Tibial artery (tissue), 4 donors: ENCODE measurements at regions of chr13 and their contacts with region 1.

Region 1: GRCh38 chr13:52128714-52129700 is at the start of gene NEK5:
- DNase-seq: peak; percentile 45 to 71
- H3K4me3 ChIP-seq: peak within 1 kb of the TSS; percentile 59 to 62
- H3K27ac ChIP-seq: peak within 1 kb of the TSS in 1 of 2 donors; percentile 52
- H3K4me1 ChIP-seq: peaks cover 0 to 16% (median 12%) of the 10 kb centered on the region in 4 donors
- H3K27me3 ChIP-seq: no peaks in the 10 kb centered on the region
- CTCF ChIP-seq: peak; percentile 57 to 60

Region 2: DNA sequence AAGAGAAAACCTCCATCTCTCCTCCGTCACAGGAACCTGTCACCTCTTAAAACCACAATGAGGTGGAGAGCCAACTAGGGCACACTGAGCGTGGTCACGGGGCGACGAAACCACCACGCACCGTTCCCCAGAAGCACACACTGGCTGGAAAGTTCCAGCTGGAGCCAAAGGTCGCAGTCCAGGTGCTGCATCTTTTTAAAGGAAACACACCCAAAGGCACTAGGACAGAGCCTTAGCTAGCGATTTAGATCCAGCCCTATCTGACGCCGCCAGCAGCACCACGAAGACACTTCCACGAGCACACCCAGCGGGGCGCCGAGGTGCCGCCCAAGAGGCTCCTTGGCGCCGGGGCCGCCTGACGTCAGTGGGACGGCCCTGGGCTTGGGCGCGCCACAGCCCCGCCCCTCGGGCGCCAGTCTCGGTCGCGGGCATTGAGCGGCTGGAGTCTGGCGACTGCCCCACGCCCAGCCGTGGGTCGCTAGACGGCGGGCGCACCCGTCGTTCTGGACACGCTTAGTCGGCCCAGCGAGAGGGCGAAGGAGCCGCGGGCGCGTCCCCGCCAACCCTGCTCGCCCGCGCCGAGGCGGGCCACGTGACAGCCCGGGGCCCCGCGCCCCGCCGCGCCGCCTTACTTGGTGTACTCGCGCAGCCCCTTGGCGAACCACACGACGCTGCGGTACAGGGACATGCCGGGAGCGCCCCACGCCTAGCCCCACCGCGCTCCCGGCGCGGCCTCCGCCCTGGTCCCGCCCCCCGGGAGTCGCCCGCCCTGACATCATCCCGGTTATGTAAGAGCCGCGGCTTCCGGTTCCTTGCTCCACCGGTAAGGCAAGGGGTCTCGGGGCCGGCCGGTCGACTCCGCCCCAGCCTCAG is 325.3 kb before region 1 on chr13 and contains the start of gene DHRS12:
- intact Hi-C with region 1: no loop called
- DNase-seq: peak; percentile 93 to 96
- H3K4me3 ChIP-seq: peak within 1 kb of the TSS; percentile 73 to 74
- H3K27ac ChIP-seq: peak within 1 kb of the TSS; percentile 95 to 99
- H3K4me1 ChIP-seq: peaks cover 0 to 61% (median 50%) of the 10 kb centered on the region in 4 donors
- H3K27me3 ChIP-seq: no peaks in the 10 kb centered on the region
- CTCF ChIP-seq: no peak

Region 3: DNA sequence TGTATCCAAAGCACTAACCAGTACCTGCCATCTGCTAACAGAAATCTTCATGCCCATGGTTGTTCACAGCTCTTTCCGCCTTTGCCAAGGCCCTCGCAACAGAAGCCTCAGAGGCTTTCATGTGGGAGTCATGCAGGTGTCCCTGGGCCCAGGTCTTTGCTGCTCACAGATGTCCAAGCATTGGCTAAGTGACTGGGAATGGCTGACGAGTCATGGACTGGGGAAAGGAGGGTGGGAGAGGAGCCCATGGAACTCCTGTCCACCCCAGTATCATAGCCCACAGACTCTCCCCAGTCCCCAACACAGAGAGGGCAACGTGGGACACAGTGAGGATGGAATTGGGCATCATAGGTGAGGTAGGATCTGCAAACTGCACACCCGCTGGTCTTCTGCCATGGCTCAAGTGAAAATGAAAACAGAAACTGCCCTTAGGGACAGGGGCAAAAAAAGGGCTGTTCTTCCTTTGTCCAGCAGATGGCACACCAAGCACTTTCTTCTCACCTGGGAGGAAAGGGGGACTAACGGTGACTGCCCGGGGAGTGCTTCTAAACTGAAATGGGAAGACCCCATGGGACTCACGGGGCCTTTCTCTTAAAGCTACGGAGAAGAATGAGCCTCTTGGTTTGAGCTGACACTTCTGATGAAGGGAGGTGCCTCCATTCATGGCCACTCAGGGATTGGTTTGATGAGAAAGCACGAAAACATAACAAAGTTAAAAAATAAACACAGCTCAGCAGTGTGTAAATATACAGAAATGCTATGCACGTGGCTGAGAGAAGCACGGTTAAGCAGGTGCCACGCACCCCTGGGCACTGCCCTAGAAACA is 314.0 kb before region 1 on chr13:
- intact Hi-C with region 1: loop called (anchors 5 kb)
- DNase-seq: peak in 1 of 2 donors; percentile 41
- H3K4me3 ChIP-seq: peak overlapping the region in 1 of 2 donors; percentile 29
- H3K27ac ChIP-seq: no peak overlapping the region
- H3K4me1 ChIP-seq: peaks cover 0 to 22% (median 12%) of the 10 kb centered on the region in 4 donors
- H3K27me3 ChIP-seq: no peaks in the 10 kb centered on the region
- CTCF ChIP-seq: peak; percentile 73 to 76

Region 4: GRCh38 chr13:52004511-52005170 is 124.4 kb before region 1 on chr13:
- intact Hi-C with region 1: loop called (anchors 5 kb)
- DNase-seq: no peak
- H3K4me3 ChIP-seq: no peak overlapping the region
- H3K27ac ChIP-seq: no peak overlapping the region
- H3K4me1 ChIP-seq: peaks cover 0 to 3% (median under 1%) of the 10 kb centered on the region in 4 donors
- H3K27me3 ChIP-seq: no peaks in the 10 kb centered on the region
- CTCF ChIP-seq: no peak